Gastrocnemius medialis (tissue), 4 donors: ENCODE measurements at regions of chr6 and their contacts with region 1.

Region 1: DNA sequence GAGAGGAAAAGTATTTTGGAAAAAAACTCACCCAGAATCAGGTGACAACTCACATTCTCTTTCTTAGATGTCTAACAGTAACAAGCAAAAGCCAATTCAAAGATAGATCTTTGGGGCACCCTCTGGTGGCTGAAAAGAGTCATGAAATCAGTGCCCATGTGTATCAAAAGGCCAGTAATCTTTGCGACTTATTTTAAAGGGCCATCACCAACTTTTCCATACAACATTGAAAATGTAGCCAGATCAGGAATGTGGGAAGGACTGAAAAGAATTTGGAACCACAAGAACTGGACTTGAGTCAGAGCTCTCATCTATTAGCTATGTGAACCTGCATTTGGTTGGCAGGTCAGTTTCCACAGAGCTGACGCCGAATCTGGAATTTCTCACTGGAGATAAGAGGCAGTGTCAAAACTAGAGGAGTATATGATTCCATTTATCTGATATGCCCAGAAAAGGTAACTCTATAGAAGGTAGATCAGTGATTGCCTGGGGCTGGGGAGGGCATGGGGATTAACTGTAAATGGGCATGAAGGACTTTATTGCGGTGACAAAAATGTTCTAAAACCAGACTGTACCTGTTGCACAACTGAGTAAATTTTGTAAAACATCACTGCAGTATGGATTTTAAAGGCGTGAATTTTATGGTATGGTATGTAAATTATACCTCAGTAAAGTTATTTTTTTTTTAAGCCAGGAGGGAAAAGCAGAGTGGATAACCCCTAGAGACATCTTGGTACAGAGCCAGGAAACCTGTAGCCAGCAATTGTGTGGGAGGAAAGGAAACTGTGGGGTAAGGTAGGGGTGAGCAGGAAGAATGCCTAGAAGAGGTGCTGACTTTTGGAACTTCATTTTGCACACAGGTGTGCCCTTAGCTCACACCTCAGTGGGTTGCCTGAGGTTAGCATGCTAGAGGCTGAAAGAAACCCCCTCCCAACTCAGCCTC is 117.1 kb upstream of the ASF1A start:
- DNase-seq: peak; percentile 32 to 69
- ATAC-seq: peak; percentile 85 to 90
- H3K4me3 ChIP-seq: peak overlapping the region; percentile 14 to 37 (median 31)
- H3K27ac ChIP-seq: no peak overlapping the region
- H3K4me1 ChIP-seq: peaks cover 7 to 8% of the 10 kb centered on the region in 2 donors
- H3K27me3 ChIP-seq: no peaks in the 10 kb centered on the region
- CTCF ChIP-seq: peak; percentile 65 to 84 (median 73)
- POLR2A ChIP-seq: no peak

Region 2: DNA sequence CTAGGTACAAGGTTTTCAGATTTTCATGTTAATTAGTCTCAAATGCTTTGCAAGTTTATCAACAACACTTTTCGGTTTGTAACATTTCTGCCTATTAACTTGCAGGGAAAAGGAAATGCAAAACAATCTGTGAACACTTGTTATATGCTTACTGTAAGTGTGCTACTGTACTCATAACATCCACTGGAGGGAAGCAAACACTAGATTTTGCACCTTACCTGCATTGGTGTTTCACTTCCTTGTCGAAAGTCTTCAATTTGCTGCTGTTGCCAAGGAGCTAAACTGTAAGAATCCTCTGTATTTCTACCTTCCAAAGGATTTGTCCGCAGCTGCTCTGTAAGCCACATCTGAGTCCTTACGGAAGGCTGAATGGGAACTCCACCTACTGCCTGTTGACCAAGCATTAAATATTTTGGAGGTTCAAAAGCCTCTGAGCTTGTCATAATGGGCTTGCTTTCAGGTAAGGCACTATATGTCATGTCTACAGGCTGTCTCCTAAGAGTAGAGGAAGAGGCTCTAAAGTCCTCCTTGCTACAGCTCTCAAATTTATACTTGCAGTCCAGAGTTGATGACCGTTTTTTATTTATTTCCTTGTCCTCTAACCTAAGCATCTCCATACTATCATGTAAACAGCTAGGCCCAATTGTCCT is 211.4 kb before region 1 on chr6:
- in situ Hi-C with region 1: no loop called
- intact Hi-C with region 1: loop called (anchors 10 kb)
- DNase-seq: no peak
- ATAC-seq: peak in 1 of 2 donors; percentile 62
- H3K4me3 ChIP-seq: no peak overlapping the region
- H3K27ac ChIP-seq: peak overlapping the region; percentile 38 to 95 (median 46)
- H3K4me1 ChIP-seq: peaks cover 27 to 39% of the 10 kb centered on the region in 2 donors
- H3K27me3 ChIP-seq: no peaks in the 10 kb centered on the region
- CTCF ChIP-seq: peak in 4 of 5 experiments; percentile 33 to 48 (median 45)
- POLR2A ChIP-seq: no peak

Region 3: DNA sequence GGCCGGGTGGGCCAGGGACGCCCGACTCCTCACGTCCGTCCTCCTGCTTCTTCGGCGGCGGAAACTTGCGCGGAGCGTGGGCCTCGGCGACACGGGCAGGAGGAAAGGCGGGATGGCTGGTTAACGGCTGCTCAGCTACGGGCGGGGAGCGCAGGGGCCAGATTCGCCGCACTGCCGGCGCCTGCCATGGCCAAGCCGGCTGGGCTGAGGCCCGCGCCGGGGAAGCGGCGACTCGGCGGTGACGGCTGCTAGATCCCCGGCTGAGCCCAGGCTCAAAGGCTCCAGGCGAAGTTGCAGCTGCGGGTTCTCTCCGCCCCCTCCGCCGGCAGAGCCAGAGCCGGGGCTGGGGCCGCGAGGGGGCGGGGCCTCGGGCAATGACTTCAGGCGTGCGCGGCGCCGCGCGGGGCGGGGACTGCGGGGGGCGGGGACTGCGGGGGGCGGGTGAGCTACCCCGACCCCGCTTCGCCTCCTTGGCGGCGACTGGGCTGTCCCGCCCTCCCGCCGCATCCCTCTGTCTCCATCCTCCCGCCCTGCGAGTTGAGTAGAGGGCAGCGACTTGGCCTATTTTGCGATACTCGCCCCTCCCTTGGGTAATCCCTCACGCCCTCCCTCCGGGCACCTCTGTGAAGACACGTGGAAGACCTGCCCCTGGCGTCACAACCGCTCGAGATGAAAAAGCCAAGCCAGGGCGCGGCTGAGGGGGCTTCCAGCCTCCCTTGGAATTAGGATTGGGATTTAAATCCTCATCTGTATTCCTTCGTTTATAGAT is 125.4 kb before region 1 on chr6 and contains the start of gene CEP85L:
- in situ Hi-C with region 1: loop called in 2 of 4 experiments (anchors 25 kb)
- intact Hi-C with region 1: loop called (anchors 5 kb)
- DNase-seq: peak; percentile 83 to 89
- ATAC-seq: peak; percentile 87 to 89
- H3K4me3 ChIP-seq: peak within 1 kb of the TSS; percentile 86 to 100 (median 92)
- H3K27ac ChIP-seq: peak within 1 kb of the TSS; percentile 97 to 100 (median 98)
- H3K4me1 ChIP-seq: peaks cover 26 to 36% of the 10 kb centered on the region in 2 donors
- H3K27me3 ChIP-seq: no peaks in the 10 kb centered on the region
- CTCF ChIP-seq: peak in 3 of 5 experiments; percentile 2 to 44 (median 15)
- POLR2A ChIP-seq: peak; percentile 93 to 95
- total RNA-seq, gene CEP85L: 15.6 to 22.8 (median 21.9) TPM

Region 4: DNA sequence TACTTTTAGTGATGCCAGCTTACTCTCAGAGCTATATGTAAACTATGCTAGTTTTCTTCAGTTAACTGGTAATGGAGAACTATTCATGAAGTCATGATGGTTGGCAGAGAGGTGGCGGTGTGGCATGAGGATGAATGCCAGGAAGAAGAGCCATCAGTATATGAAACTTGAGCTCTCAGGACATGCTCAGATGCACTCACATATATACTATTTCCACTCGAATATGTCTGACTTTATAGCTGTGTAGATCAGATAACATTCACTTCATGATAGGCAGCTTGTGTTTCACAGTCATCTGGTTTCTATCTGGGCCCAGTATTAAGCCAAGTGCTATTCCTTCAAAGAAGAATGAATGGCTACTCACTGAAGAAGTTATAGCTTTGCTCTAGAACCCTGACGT is 79.3 kb before region 1 on chr6:
- in situ Hi-C with region 1: no loop called
- intact Hi-C with region 1: loop called (anchors 2 kb)
- DNase-seq: no peak
- ATAC-seq: peak; percentile 32 to 50
- H3K4me3 ChIP-seq: no peak overlapping the region
- H3K27ac ChIP-seq: peak overlapping the region in 2 of 4 donors; percentile 11 to 24
- H3K4me1 ChIP-seq: peaks cover 18 to 34% of the 10 kb centered on the region in 2 donors
- H3K27me3 ChIP-seq: no peaks in the 10 kb centered on the region
- CTCF ChIP-seq: peak in 2 of 5 experiments; percentile 23 to 28
- POLR2A ChIP-seq: no peak